ENCODE measurements at regions of chr2 and their contacts with region 1.

Region 1: GRCh38 chr2:108988796-108989713 is at the start of gene EDAR:
- DNase-seq: peak; percentile 38
- ATAC-seq: peak; percentile 89 to 95
- total RNA-seq, gene EDAR: 0.06 TPM in 1 of 2 donors, not detected in the other

Region 2: GRCh38 chr2:108855194-108855593 is 133.9 kb before region 1 on chr2:
- intact Hi-C with region 1: loop called in 1 of 2 experiments (anchors 2 kb)
- DNase-seq: no peak
- ATAC-seq: no peak

Region 3: GRCh38 chr2:108916796-108917421 is 72.1 kb before region 1 on chr2:
- intact Hi-C with region 1: no loop called
- DNase-seq: no peak
- ATAC-seq: no peak

Region 4: GRCh38 chr2:108927936-108928659 is 61.0 kb before region 1 on chr2:
- intact Hi-C with region 1: loop called (anchors 2 to 5 kb)
- DNase-seq: no peak
- ATAC-seq: peak; percentile 36 to 41

Region 5: DNA sequence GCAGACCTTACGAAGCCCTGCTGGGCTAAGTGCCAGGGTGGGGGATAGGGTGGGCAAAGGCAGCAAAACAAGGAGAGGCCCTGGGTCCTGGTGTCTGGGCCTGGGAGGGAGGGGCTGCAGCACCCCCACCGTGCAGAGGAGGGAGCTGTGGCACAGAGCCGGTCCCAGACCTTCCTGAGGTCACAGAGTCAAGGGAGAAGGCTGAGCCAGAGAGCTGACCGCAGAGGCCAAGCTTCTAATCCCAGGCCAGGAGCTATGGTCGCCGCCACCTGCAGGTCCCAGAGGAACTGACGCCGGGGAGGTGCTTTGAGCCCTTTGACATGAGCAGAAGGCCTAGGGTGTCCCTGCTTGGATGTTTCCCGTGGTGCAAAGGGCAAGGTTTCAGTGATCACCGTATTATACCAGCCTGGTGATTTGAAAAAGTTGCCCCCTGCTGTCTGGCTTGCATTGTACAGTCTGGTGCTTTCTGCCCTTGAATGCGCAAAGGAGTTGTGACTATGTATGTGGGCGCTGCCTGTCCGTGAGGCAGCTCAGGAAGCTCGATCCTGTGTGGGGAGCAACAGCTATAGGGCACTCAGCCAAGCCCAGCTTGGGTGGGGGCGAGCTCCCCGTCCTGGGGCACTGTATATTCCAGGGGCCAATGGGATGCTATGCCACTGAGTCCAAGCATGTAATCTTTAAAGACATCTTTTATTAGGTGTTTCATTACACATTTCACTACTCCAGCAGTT is 44.3 kb before region 1 on chr2:
- intact Hi-C with region 1: no loop called
- DNase-seq: no peak
- ATAC-seq: no peak